ENCODE measurements at regions of chr2 and their contacts with region 1.

Region 1: DNA sequence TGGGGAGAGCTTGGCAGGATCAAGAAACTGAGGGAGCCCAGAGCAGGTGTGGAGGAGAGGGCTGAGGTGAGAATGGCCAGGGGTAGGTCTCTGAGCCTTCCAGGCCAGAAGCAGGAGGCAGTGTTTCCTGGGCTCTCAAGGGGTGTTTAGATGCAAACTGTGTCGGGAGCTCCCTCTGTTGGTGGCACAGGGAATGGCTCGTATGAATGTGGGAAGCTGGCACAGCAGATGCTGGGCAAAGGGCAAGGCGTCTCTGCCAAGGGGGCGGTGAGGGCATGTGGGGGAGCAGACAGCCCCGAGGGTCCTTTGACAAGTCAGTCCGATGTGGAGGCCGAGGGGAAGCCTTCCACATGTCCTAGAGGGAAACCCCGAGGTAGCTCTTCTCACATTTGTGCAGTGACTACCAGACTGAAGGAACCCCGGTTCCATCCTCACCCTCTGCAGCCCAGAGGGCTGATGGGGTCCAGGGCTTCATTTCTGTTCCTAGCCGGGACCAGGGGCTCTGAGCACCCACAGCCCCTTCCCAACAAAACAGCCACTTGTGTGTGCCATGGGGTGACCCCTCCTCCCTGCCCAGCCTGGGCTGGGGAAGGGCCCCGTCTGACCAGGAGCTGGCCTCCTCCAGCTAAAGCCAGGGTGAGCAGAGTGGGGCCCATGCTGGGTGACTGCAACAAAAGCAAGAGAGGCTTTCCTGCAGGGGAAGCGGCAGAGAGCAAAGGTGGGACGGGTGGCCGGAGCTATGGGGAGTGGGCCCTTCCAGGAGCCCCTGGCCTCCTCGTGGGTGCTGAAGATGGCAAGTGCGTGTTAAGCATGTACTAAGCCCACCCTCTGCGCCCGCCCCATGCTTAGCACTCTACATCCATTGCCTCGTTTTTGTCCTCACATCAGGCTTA is 103.4 kb downstream of the SEPTIN10 start:
- DNase-seq: peak; percentile 89
- H3K4me3 ChIP-seq: no peak overlapping the region
- H3K27ac ChIP-seq: no peak overlapping the region
- H3K4me1 ChIP-seq: peaks cover 0 to 21% (median 3%) of the 10 kb centered on the region in 6 donors
- H3K27me3 ChIP-seq: no peaks in the 10 kb centered on the region
- CTCF ChIP-seq: peak; percentile 69 to 94 (median 91)
- POLR2A ChIP-seq: no peak

Region 2: DNA sequence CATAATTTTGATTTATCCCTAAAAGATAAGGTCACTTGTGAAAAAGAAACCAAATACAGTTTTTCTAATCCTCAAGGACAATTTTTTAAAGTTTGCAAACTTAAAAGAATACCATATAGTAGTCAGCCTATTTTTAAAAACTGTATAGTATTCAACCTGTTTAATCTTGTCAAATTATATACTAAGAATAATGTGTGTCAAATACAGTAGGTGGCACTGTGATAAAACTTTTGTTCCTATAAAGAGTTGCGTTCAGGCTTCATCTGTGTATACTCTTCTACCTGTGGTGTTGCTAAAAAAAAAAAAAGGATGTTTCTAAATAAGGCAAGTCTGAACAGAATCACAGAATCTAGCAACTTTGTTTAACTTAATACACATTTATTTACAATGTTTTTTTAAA is 655.2 kb before region 1 on chr2:
- intact Hi-C with region 1: loop called (anchors 10 kb)
- DNase-seq: no peak
- H3K4me3 ChIP-seq: no peak overlapping the region
- H3K27ac ChIP-seq: no peak overlapping the region
- H3K4me1 ChIP-seq: no peaks in the 10 kb centered on the region
- H3K27me3 ChIP-seq: no peaks in the 10 kb centered on the region
- CTCF ChIP-seq: no peak
- POLR2A ChIP-seq: no peak

Region 3: DNA sequence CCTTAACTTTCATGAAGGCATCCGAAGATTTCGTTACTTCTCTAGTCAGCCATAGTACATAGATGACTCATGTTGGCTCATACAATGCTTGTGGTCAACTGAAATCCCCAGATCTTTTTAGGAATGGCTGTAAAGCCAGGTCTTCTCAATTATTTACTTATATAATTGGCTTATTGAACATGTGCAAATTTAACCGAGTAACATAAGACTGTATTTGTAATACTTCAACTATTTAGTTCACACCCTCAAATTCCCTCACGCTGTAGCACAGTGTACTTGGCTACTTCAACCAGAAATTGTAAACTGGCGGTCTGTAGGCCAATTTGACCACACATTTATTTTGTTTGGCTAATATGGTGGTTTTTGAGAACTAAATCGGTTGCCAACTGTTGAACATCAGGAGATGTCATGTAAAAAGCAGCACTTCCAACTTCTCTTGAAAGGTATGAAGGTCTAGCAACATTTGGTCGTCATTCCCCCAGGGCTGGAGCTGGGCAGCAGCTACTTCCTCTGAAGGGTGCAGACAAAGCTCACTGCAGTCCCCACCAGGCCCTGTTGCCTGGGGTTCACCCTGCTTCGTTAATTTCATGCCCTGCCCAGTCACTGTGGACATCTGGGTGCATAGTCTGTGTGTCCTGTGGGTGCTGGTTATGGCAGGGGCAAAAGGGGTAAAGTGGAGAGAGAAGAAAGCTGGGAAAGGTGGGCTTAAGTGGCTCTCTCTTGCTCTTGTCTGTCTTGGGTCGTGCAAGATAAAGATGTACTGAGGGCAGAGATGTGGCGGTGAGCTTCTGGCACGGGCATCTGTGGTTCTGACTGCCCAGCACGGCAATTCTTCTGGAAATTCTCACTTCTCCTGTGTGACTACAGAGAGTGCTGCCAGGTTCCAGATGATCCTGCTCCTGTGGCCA is 384.5 kb before region 1 on chr2:
- intact Hi-C with region 1: loop called (anchors 2 kb)
- DNase-seq: no peak
- H3K4me3 ChIP-seq: no peak overlapping the region
- H3K27ac ChIP-seq: no peak overlapping the region
- H3K4me1 ChIP-seq: peaks cover 11 to 36% (median 32%) of the 10 kb centered on the region in 6 donors
- H3K27me3 ChIP-seq: peaks cover 0 to 71% (median 25%) of the 10 kb centered on the region in 7 donors
- CTCF ChIP-seq: no peak
- POLR2A ChIP-seq: no peak

Measured in spleen (tissue), 13 donors.